Activated CD8-positive, alpha-beta T cell treated with anti-CD3 and anti-CD28 coated beads for 36 hours (primary cell): ENCODE measurements at regions of chr10 and their contacts with region 1.

Region 1: DNA sequence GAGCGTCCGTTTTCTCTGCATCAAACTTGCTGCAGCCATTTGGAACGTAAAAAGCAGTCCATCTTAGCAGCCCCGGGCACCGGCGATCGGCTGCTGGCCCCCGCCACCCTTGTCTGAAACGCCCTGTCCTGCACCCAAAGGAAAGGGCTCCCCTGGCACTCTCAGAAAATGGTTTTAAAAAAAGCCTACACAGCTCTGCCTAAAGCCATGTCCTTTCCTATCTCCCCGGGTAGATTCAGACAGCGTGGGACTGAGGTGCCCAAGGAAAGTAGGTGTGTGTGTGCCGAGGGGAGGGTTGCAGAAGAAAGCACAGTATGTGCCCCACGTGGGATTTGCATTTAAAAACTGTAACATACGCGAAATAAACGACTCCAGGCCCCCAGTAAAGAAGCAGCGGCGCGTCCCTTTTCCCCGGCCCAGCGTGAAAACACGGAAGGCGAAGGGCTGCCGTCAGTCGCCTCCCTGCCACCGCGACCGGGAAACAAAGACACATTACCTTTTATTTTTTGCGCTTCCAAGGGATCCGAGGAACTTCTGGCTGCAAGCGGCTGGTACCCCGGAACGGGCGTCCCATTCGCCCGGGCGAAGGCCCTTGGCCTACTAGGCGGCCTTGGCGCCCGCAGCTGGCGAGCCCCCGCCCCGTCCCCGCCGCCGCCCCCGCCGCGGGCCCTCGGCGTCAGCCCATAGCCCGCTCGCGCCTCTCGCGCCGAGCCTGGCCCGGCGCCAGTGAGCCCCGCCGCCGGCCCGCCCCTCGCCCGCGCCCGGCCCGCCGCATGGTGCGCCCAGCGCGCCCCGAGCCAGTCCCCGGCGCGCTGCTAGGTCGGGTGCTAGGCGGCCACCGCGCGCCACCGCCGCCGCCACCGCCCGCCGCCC is 304.6 kb downstream of the PRPF18 start:
- DNase-seq: no peak
- ATAC-seq: peak; percentile 48
- H3K4me3 Mint-ChIP-seq: peak overlapping the region; percentile 50
- H3K27ac Mint-ChIP-seq: no peak overlapping the region
- H3K4me1 Mint-ChIP-seq: peaks cover 19% of the 10 kb centered on the region
- H3K27me3 Mint-ChIP-seq: peaks cover 62% of the 10 kb centered on the region
- CTCF ChIP-seq: no peak

Region 2: DNA sequence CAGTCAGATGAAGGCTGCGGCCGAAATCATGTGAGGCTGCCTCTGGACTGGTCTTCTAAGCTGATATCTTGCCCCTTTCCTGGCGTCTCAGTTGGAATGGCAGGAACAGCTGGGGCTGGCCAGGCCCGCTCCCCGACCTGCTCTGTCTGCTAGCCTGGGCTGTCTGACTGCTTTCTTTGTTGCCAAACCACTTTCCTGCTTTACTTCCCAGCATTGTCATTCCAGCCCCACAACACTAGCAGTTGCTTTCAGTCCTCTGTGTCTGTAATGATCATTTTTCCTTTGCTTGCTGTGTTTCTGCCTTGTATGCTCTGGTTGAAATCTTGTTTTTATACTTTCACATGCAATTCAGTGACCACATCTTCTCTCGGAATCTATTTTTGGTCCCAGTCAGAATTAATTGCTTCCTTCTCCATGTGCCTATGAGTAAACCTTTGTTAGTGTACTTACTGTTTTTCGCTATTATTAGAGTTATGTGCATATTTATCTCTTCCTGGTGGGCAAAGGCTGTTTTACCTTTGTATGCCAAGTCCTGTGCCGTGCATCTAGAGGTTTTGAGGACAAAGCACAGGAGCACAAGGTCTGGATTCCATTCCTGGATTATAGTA is 283.0 kb before region 1 on chr10:
- CTCF ChIA-PET with region 1: no interaction called
- POLR2A ChIA-PET with region 1: no interaction called
- intact Hi-C with region 1: no loop called
- DNase-seq: no peak
- ATAC-seq: no peak
- H3K4me3 Mint-ChIP-seq: no peak overlapping the region
- H3K27ac Mint-ChIP-seq: no peak overlapping the region
- H3K4me1 Mint-ChIP-seq: no peaks in the 10 kb centered on the region
- H3K27me3 Mint-ChIP-seq: no peaks in the 10 kb centered on the region
- CTCF ChIP-seq: no peak

Region 3: GRCh38 chr10:14009371-14010100 is 118.2 kb after region 1 on chr10:
- CTCF ChIA-PET with region 1: no interaction called
- POLR2A ChIA-PET with region 1: no interaction called
- intact Hi-C with region 1: loop called (anchors 10 kb)
- DNase-seq: peak; percentile 83
- ATAC-seq: peak; percentile 88
- H3K4me3 Mint-ChIP-seq: peak overlapping the region; percentile 74
- H3K27ac Mint-ChIP-seq: peak overlapping the region; percentile 83
- H3K4me1 Mint-ChIP-seq: peaks cover 29% of the 10 kb centered on the region
- H3K27me3 Mint-ChIP-seq: no peaks in the 10 kb centered on the region
- CTCF ChIP-seq: no peak